A549 (cell line): ENCODE measurements at regions of chr4 and their contacts with region 1.

Region 1: DNA sequence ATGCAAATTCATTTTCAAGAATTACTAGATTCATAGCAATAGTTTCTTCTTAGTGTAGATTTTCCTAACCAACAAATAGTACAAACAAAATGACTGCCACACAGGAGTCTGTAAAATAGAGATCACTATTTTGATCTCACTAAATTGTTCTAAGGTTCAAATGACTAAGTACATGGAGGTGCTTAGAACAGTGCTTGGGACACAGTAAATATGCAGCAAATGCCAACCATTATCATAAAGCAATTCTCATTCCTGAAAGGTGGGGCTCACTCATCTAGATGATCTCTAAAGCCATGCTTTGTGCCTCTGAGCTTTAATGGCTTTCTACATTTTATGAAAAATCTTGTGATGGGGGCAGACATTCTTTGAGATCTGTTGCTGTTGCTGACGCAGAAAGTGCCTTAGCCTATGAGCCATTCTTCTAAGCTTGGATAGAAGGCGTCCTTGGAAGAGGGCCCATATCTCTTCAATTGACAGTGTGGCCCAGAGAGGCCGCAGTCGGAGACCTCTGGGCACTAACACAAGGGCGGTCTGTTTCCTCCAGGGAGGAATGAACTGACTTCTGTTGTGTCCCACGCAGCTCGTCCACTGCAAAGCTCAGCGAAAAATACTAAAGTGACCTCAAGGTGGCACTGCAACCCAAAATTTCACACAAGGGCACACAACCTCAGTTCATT is 23.5 kb downstream of the TLR10 start:
- DNase-seq: peak; percentile 15 to 43
- ATAC-seq: peak; percentile 74 to 94
- H3K4me3 ChIP-seq: no peak overlapping the region
- H3K27ac ChIP-seq: no peak overlapping the region
- H3K4me1 ChIP-seq: no peaks in the 10 kb centered on the region
- CTCF ChIP-seq: peak; percentile 77
- EP300 ChIP-seq: no peak
- POLR2A ChIP-seq: no peak
- RAD21 ChIP-seq: peak; percentile 86

Region 2: DNA sequence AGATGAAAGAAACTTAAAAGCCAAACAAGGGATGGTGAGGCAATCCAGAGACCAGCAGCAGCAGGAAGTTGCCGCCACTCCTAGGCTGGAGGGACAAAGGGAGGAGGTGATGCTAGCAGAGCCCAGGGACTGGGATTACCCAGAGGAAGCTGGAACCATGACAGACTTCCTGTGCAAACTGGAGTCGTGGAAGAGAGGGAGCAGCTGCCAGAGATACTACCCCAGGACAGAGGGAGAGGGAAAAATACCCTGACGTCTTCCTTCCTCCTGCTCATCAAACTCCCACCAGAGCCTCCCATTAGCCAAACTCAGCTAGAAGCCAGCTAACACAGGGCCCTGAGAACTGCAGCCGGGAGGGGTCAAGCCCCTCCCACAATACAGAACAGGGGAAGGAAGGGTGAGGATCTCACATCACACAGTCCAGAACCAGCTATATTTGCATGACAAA is 196.5 kb before region 1 on chr4:
- CTCF ChIA-PET with region 1: no interaction called
- POLR2A ChIA-PET with region 1: no interaction called
- DNase-seq: peak in 1 of 2 experiments; percentile 5
- ATAC-seq: no peak
- H3K4me3 ChIP-seq: no peak overlapping the region
- H3K27ac ChIP-seq: no peak overlapping the region
- H3K4me1 ChIP-seq: peaks cover 18% of the 10 kb centered on the region
- CTCF ChIP-seq: no peak
- EP300 ChIP-seq: no peak
- POLR2A ChIP-seq: no peak
- RAD21 ChIP-seq: no peak

Region 3: GRCh38 chr4:38743866-38744265 is 15.4 kb before region 1 on chr4:
- CTCF ChIA-PET with region 1: interaction called, 12 read pairs
- POLR2A ChIA-PET with region 1: no interaction called
- DNase-seq: no peak
- ATAC-seq: no peak
- H3K4me3 ChIP-seq: no peak overlapping the region
- H3K27ac ChIP-seq: no peak overlapping the region
- H3K4me1 ChIP-seq: no peaks in the 10 kb centered on the region
- CTCF ChIP-seq: no peak
- EP300 ChIP-seq: no peak
- POLR2A ChIP-seq: no peak
- RAD21 ChIP-seq: no peak

Region 4: GRCh38 chr4:38782452-38783108 is 23.3 kb after region 1 on chr4 and contains the start of gene TLR10:
- CTCF ChIA-PET with region 1: interaction called, 41 read pairs
- POLR2A ChIA-PET with region 1: no interaction called
- DNase-seq: peak; percentile 19 to 57
- ATAC-seq: peak; percentile 68 to 71; a peak in 4 of 6 replicates
- H3K4me3 ChIP-seq: no peak within 1 kb of the TSS
- H3K27ac ChIP-seq: no peak within 1 kb of the TSS
- H3K4me1 ChIP-seq: peaks cover 9% of the 10 kb centered on the region; the same call in 1 of the 3 replicates
- CTCF ChIP-seq: peak; percentile 53
- EP300 ChIP-seq: no peak
- POLR2A ChIP-seq: no peak
- RAD21 ChIP-seq: peak; percentile 45 to 58
- polyA plus RNA-seq, gene TLR10: 0.11 and 0.14 TPM in 2 replicates

Region 5: GRCh38 chr4:38795087-38795486 is 35.8 kb after region 1 on chr4:
- CTCF ChIA-PET with region 1: interaction called, 60 read pairs
- POLR2A ChIA-PET with region 1: no interaction called
- DNase-seq: no peak
- ATAC-seq: no peak
- H3K4me3 ChIP-seq: no peak overlapping the region
- H3K27ac ChIP-seq: no peak overlapping the region
- H3K4me1 ChIP-seq: no peaks in the 10 kb centered on the region
- CTCF ChIP-seq: no peak
- EP300 ChIP-seq: no peak
- POLR2A ChIP-seq: no peak
- RAD21 ChIP-seq: no peak

Region 6: GRCh38 chr4:38804654-38805295 is 45.5 kb after region 1 on chr4 and contains the start of gene TLR1:
- CTCF ChIA-PET with region 1: interaction called, 60 read pairs
- POLR2A ChIA-PET with region 1: no interaction called
- DNase-seq: peak in 1 of 2 experiments; percentile 56
- ATAC-seq: peak; percentile 56 to 66; a peak in 4 of 6 replicates
- H3K4me3 ChIP-seq: no peak within 1 kb of the TSS
- H3K27ac ChIP-seq: peak within 1 kb of the TSS; percentile 12 to 51; a peak in 3 of 6 replicates
- H3K4me1 ChIP-seq: peaks cover 7% of the 10 kb centered on the region; the same call in 1 of the 3 replicates
- CTCF ChIP-seq: peak; percentile 50
- EP300 ChIP-seq: no peak
- POLR2A ChIP-seq: no peak
- RAD21 ChIP-seq: peak; percentile 54 to 59
- polyA plus RNA-seq, gene TLR1: 2.6 and 2.7 TPM in 2 replicates

Region 7: GRCh38 chr4:38860788-38861424 is 101.7 kb after region 1 on chr4:
- CTCF ChIA-PET with region 1: interaction called, 27 read pairs
- POLR2A ChIA-PET with region 1: no interaction called
- DNase-seq: peak; percentile 42 to 70
- ATAC-seq: peak; percentile 48 to 73; a peak in 3 of 6 replicates
- H3K4me3 ChIP-seq: no peak overlapping the region
- H3K27ac ChIP-seq: no peak overlapping the region
- H3K4me1 ChIP-seq: peaks cover 14% of the 10 kb centered on the region
- CTCF ChIP-seq: peak; percentile 58
- EP300 ChIP-seq: no peak
- POLR2A ChIP-seq: no peak
- RAD21 ChIP-seq: no peak

Region 8: GRCh38 chr4:38896940-38897339 is 137.7 kb after region 1 on chr4:
- CTCF ChIA-PET with region 1: interaction called, 11 read pairs
- POLR2A ChIA-PET with region 1: no interaction called
- DNase-seq: no peak
- ATAC-seq: no peak
- H3K4me3 ChIP-seq: no peak overlapping the region
- H3K27ac ChIP-seq: no peak overlapping the region
- H3K4me1 ChIP-seq: no peaks in the 10 kb centered on the region
- CTCF ChIP-seq: no peak
- EP300 ChIP-seq: no peak
- POLR2A ChIP-seq: no peak
- RAD21 ChIP-seq: no peak